ENCODE measurements at regions of chr3 and their contacts with region 1.

Region 1: DNA sequence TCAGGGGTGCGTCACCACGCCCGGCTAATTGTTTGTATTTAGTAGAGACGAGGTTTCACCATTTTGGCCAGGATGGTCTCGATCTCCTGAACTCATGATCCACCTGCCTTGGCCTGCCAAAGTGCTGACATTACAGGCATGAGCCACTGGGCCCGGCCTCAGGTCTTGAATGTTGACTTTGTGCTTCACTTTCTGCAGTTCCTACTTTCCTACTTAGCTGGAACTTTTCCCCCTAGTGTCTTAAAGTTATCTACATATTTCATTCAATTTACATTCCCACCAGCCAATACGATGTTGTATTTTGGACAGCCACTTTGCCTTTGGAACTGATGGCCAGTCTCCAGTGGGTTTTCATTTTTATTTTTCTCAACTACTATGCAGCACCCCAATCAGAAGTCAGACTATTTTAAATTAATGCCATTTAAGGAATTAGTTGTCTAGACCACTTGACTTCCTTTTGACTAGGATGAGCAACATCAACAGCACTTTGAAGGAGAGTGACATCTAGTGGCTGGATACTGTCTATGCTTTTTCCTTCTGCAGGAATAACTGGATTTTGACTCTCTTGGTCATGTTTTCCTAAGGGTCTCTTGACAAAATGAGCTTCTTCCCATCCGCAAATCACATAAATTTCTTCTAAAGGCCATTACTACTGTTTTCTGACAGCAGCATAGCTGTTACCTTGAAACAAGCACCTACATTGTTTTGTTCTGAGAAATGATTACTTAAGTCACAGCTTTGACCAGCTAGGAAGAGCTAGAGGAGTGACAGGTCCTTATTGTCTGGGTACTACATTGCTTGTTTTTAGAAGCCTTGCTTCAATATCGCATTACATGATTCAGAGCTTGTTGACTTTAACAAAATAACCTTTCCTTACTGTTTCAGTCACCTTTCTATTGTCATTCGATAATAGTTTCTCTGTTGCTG is 140.2 kb downstream of the ITPR1 start:
- DNase-seq: peak; percentile 68
- CTCF ChIP-seq: peak; percentile 76

Region 2: DNA sequence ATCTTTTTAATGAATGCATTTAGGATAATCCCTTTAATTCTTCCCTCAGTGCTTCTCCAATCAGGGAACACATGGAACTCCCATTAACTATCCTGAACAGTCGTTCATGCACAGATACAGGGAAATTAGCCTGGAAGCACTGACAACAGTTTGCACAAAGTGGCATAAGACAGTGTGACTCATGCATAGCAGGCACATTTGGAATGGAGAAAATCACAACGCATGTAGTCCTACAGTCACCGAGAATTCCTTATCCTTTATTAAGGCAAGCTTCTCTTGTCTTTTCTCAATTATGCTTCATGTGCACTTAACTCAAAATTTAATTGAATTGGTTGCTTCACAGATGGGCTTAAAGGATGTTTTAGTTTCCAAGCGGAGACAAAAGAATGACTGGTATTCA is 1298.8 kb before region 1 on chr3:
- CTCF ChIA-PET with region 1: no interaction called
- POLR2A ChIA-PET with region 1: no interaction called
- DNase-seq: no peak
- CTCF ChIP-seq: no peak

Region 3: GRCh38 chr3:4334548-4334947 is 298.8 kb before region 1 on chr3:
- CTCF ChIA-PET with region 1: interaction called, 27 read pairs
- POLR2A ChIA-PET with region 1: no interaction called
- DNase-seq: no peak
- CTCF ChIP-seq: peak; percentile 12

Region 4: GRCh38 chr3:4340411-4341335 is 292.7 kb before region 1 on chr3:
- CTCF ChIA-PET with region 1: interaction called, 27 read pairs
- POLR2A ChIA-PET with region 1: no interaction called
- DNase-seq: no peak
- CTCF ChIP-seq: no peak

Region 5: DNA sequence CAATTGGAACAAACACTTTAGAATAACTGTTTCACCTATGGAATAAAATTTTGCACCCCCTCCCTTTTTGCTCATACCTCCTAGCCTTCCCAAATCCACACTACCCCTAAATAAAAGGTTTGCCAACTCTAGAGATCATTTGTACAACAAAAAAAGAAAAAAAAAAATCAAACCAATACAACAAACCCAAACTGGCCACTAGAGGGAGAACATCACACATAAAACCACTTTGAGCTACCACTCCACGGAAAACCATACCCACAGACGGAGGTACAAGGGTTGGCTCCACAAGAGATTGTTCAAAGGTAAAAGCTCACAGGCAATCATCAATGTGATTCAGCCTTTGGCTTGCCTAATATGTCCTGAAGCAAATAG is 282.6 kb before region 1 on chr3:
- CTCF ChIA-PET with region 1: interaction called, 88 read pairs
- POLR2A ChIA-PET with region 1: no interaction called
- DNase-seq: peak; percentile 72
- CTCF ChIP-seq: peak; percentile 63

Region 6: GRCh38 chr3:4615750-4616149 is 17.6 kb before region 1 on chr3:
- CTCF ChIA-PET with region 1: interaction called, 17 read pairs
- POLR2A ChIA-PET with region 1: no interaction called
- DNase-seq: no peak
- CTCF ChIP-seq: no peak

Region 7: GRCh38 chr3:4644951-4645350 is 11.6 kb after region 1 on chr3:
- CTCF ChIA-PET with region 1: interaction called, 17 read pairs
- POLR2A ChIA-PET with region 1: no interaction called
- DNase-seq: no peak
- CTCF ChIP-seq: no peak

Region 8: GRCh38 chr3:4703054-4703480 is 69.7 kb after region 1 on chr3:
- CTCF ChIA-PET with region 1: no interaction called
- POLR2A ChIA-PET with region 1: no interaction called
- DNase-seq: no peak
- CTCF ChIP-seq: no peak